ENCODE measurements at regions of chr10 and their contacts with region 1.

Region 1: GRCh38 chr10:48981310-48981907 is 41.8 kb upstream of the LRRC18 start:
- DNase-seq: peak; percentile 23 to 44
- ATAC-seq: peak; percentile 79 to 84
- H3K4me3 ChIP-seq: no peak overlapping the region
- H3K27ac ChIP-seq: no peak overlapping the region
- H3K4me1 ChIP-seq: no peaks in the 10 kb centered on the region
- H3K27me3 ChIP-seq: no peaks in the 10 kb centered on the region
- CTCF ChIP-seq: peak; percentile 62 to 88 (median 81)
- POLR2A ChIP-seq: no peak

Region 2: DNA sequence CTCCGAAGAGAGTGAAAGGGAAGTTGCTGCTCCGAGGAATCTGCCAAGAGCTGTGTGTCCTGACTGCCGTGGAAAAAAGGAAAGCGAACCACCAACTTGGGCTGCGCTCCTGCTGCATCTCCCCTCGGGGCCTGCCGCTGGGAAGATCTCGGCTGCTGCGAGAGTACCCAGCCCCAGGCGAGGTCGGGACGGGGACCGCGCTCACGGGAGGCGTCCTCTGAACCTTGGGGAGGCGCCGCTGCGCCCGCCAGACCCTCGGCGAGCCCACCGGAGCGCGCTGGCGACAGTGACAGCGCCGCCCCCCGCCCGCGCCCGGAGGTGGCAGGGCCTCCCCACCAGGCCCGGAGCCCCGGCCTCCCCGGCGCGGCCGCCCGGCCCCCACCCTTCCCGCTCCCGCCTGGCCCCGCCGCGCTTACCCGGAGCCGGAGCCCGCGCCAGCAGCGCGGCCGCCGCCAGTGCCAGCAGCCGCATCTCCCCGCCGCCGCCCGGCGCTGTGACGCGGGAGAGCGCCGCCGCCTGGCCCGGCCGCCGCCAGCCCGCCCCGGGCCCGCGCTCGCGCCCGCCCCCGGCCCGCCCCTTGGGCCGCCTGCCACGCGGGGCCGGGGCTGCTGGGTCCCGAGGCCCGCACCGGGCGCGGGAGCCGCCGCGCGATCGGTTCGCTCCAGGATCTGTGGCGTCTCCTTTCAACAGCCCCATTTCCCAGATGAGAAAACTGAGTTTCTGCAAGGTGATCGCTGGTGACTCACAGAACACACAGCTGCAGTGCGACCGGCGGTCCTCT is 133.8 kb after region 1 on chr10 and contains the start of gene VSTM4:
- in situ Hi-C with region 1: no loop called
- intact Hi-C with region 1: loop called (anchors 10 kb)
- DNase-seq: no peak
- ATAC-seq: peak; percentile 60
- H3K4me3 ChIP-seq: peak within 1 kb of the TSS; percentile 55 to 70 (median 62)
- H3K27ac ChIP-seq: peak within 1 kb of the TSS; percentile 50 to 69 (median 60)
- H3K4me1 ChIP-seq: peaks cover 8 to 12% of the 10 kb centered on the region in 2 donors
- H3K27me3 ChIP-seq: no peaks in the 10 kb centered on the region
- CTCF ChIP-seq: no peak
- POLR2A ChIP-seq: peak in 1 of 2 donors; percentile 33
- total RNA-seq, gene VSTM4: 1.8 to 4.0 (median 2.6) TPM

Region 3: DNA sequence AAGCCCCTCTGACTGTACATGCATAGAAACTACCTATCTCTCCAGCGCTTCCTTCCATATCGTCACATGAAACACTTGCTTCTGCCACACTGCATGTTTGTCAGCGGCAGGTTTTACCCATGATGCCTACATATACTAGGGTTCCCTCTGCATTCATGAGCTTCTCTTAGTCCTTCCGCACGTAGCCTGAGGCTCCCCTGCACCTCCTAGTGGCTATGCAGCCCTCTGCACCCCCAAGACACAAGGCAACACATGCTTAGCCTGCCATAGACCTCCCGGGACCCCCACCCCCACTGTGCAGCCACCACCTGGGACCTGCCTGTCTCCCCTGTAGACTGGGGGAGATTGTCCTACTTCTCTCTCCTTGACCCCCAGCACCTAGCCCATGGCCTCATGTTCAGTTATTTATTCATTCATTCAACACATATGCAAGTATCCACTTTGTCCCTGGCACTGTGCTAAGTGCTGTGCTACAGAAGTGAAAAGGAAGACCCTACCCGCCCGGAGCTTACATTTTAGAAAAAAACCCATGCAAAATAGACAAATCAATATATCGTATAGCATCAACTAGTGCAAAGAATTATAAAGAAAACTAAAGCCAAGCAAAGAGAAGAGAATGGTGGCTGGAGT is 183.3 kb after region 1 on chr10:
- in situ Hi-C with region 1: loop called in 2 of 4 experiments (anchors 10 kb)
- intact Hi-C with region 1: loop called (anchors 1 kb)
- DNase-seq: no peak
- ATAC-seq: no peak
- H3K4me3 ChIP-seq: no peak overlapping the region
- H3K27ac ChIP-seq: no peak overlapping the region
- H3K4me1 ChIP-seq: no peaks in the 10 kb centered on the region
- H3K27me3 ChIP-seq: no peaks in the 10 kb centered on the region
- CTCF ChIP-seq: peak; percentile 22 to 44 (median 36)
- POLR2A ChIP-seq: no peak

Region 4: GRCh38 chr10:49362596-49363260 is 381.3 kb after region 1 on chr10:
- in situ Hi-C with region 1: loop called in 1 of 4 experiments (anchors 25 kb)
- intact Hi-C with region 1: no loop called
- DNase-seq: no peak
- ATAC-seq: no peak
- H3K4me3 ChIP-seq: no peak overlapping the region
- H3K27ac ChIP-seq: no peak overlapping the region
- H3K4me1 ChIP-seq: no peaks in the 10 kb centered on the region
- H3K27me3 ChIP-seq: no peaks in the 10 kb centered on the region
- CTCF ChIP-seq: no peak
- POLR2A ChIP-seq: no peak

Region 5: DNA sequence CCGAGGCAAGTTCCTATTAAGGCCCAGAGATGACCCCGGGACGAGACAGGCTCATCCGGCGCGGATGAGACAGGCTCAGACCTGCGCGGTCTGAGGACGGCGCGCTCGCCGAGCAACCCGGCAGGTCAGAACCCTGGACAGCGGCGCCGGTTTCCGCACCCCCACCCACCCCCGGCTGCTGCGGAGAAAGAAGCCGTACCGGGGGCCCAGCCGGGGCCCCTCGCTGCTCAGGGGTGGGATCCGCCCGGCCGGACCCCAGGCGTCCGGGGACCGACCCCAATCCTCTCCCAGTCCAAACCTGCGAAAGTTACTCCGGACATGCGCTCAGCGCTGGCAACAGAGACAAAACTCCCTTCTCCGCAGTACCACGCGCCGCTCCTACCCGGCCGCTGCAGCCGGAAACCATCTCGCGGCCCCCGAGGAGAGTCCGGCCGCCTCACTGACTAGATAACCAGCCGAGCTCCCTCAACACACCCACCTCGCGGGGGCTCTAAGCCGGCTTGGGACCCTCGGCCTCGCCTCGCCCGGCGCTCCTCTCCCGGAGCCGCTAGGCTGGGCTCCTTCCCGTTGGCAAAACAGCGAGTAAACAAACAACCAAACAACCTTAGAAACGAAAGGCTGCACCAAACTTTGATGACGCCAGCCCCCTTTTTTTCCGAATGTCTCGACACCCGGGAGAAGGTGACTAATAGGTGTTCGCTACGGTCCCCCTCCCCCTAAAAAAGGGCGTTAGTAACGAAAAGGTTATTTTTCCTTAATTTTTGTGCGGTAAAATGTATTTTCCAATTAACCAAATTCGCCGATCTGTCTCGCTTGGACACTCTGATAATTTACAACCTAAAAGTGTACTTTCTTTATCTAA is 416.8 kb after region 1 on chr10:
- in situ Hi-C with region 1: loop called in 2 of 4 experiments (anchors 25 kb)
- intact Hi-C with region 1: no loop called
- DNase-seq: no peak
- ATAC-seq: peak in 1 of 2 donors; percentile 70
- H3K4me3 ChIP-seq: peak overlapping the region; percentile 3 to 50 (median 44)
- H3K27ac ChIP-seq: no peak overlapping the region
- H3K4me1 ChIP-seq: peaks cover 0 to 8% of the 10 kb centered on the region in 2 donors
- H3K27me3 ChIP-seq: peaks cover 72 to 83% (median 75%) of the 10 kb centered on the region in 3 donors
- CTCF ChIP-seq: no peak
- POLR2A ChIP-seq: no peak

Region 6: DNA sequence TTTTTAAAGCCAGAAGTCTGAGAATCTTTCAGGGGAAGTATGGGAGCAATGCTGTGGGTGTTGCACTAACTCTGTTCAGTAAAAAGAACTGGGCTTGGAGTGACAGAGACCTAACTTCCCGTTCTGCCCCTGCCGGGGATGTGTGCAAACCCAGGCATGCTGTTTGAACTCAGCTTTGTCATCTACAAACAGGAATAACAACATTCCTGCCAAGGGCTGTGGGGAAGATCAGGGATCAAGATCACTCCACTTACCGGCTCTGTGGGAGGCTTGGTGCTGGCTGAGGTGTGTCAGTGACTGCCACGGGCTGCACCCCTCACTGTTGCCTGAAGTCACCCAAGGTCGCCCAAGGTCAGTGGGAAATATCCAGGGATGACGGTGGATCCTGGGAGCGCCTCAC is 437.6 kb after region 1 on chr10:
- in situ Hi-C with region 1: no loop called
- intact Hi-C with region 1: loop called (anchors 10 kb)
- DNase-seq: no peak
- ATAC-seq: no peak
- H3K4me3 ChIP-seq: no peak overlapping the region
- H3K27ac ChIP-seq: no peak overlapping the region
- H3K4me1 ChIP-seq: no peaks in the 10 kb centered on the region
- H3K27me3 ChIP-seq: no peaks in the 10 kb centered on the region
- CTCF ChIP-seq: no peak
- POLR2A ChIP-seq: no peak

Region 7: GRCh38 chr10:49518982-49519578 is 537.7 kb after region 1 on chr10:
- in situ Hi-C with region 1: loop called (anchors 10 to 25 kb)
- intact Hi-C with region 1: loop called (anchors 5 kb)
- DNase-seq: no peak
- ATAC-seq: peak; percentile 69 to 74
- H3K4me3 ChIP-seq: no peak overlapping the region
- H3K27ac ChIP-seq: no peak overlapping the region
- H3K4me1 ChIP-seq: peaks cover 19 to 26% of the 10 kb centered on the region in 2 donors
- H3K27me3 ChIP-seq: no peaks in the 10 kb centered on the region
- CTCF ChIP-seq: peak; percentile 58 to 69 (median 64)
- POLR2A ChIP-seq: no peak